Naive thymus-derived CD4-positive, alpha-beta T cell (primary cell): ENCODE measurements at regions of chr5 and their contacts with region 1.

Region 1: GRCh38 chr5:154940772-154941620 is at the start of gene MRPL22:
- DNase-seq: peak; percentile 85 to 99 (median 94)
- ATAC-seq: peak; percentile 84
- H3K4me3 ChIP-seq: peak within 1 kb of the TSS; percentile 76
- H3K4me3 Mint-ChIP-seq: peak within 1 kb of the TSS; percentile 89 to 100 (median 96)
- H3K27ac ChIP-seq: peak within 1 kb of the TSS; percentile 94
- H3K27ac Mint-ChIP-seq: peak within 1 kb of the TSS; percentile 93 to 98 (median 96)
- H3K4me1 ChIP-seq: peaks cover 22 to 25% of the 10 kb centered on the region in 2 donors
- H3K4me1 Mint-ChIP-seq: peaks cover 23 to 62% (median 47%) of the 10 kb centered on the region in 7 donors
- H3K27me3 ChIP-seq: no peaks in the 10 kb centered on the region
- H3K27me3 Mint-ChIP-seq: no peaks in the 10 kb centered on the region
- total RNA-seq, gene MRPL22: 18.4 to 62.0 (median 24.9) TPM

Region 2: GRCh38 chr5:154189819-154190594 is 751.0 kb before region 1 on chr5:
- CTCF ChIA-PET with region 1: no interaction called
- POLR2A ChIA-PET with region 1: no interaction called
- intact Hi-C with region 1: loop called (anchors 2 to 10 kb)
- DNase-seq: peak; percentile 63 to 82 (median 79)
- ATAC-seq: peak; percentile 93
- H3K4me3 ChIP-seq: peak overlapping the region; percentile 94
- H3K4me3 Mint-ChIP-seq: peak overlapping the region; percentile 82 to 93 (median 88)
- H3K27ac ChIP-seq: peak overlapping the region; percentile 80
- H3K27ac Mint-ChIP-seq: peak overlapping the region; percentile 71 to 83 (median 78)
- H3K4me1 ChIP-seq: peaks cover 16 to 22% of the 10 kb centered on the region in 2 donors
- H3K4me1 Mint-ChIP-seq: peaks cover 33 to 49% (median 41%) of the 10 kb centered on the region in 7 donors
- H3K27me3 ChIP-seq: no peaks in the 10 kb centered on the region
- H3K27me3 Mint-ChIP-seq: peaks cover 0 to 12% (median 0%) of the 10 kb centered on the region in 5 donors

Region 3: GRCh38 chr5:154647114-154647760 is 293.8 kb before region 1 on chr5:
- CTCF ChIA-PET with region 1: interaction called, 6 read pairs
- POLR2A ChIA-PET with region 1: no interaction called
- intact Hi-C with region 1: loop called (anchors 1 to 5 kb)
- DNase-seq: no peak
- ATAC-seq: peak; percentile 52
- H3K4me3 ChIP-seq: peak overlapping the region; percentile 54
- H3K4me3 Mint-ChIP-seq: peak overlapping the region; percentile 72 to 87 (median 84)
- H3K27ac ChIP-seq: no peak overlapping the region
- H3K27ac Mint-ChIP-seq: peak overlapping the region in 1 of 9 donors; percentile 59
- H3K4me1 ChIP-seq: peaks cover 0 to 3% of the 10 kb centered on the region in 2 donors
- H3K4me1 Mint-ChIP-seq: peaks cover 10 to 19% (median 16%) of the 10 kb centered on the region in 7 donors
- H3K27me3 ChIP-seq: peaks cover 0 to 12% of the 10 kb centered on the region in 2 donors
- H3K27me3 Mint-ChIP-seq: peaks cover 18 to 46% (median 28%) of the 10 kb centered on the region in 5 donors

Region 4: DNA sequence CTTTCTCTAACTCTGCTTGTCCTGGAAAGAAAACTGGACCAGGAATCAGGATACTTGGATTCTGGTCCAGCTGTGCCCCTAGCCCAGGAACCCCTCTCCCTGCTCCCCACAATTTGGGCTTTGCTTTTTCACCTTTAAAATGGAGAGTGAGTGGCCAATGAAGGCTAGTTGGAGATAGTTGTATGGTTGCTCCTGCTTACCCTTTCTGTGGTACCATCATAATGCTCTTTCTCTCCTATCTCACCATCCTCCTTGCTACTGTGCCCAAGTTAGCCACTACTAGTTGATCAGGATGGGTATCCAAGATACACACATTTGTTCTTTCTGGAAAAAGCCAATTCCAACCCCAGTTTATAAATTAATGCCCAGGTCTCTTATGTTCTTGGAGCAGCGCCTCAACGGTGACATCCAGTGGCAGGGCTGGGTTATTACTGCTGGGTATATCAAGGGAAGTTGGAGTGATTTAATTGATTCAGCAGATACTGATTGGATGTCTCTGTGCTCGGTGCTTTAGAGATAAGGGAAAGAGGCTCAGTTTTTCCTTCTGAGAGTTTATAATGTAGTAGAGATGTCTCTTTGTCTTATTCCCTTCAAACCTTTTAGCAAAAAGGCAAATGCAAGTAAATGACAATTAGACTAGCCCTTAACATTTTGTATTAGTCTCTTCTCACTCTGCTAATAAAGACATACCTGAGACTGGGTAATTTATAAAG is 129.2 kb before region 1 on chr5:
- CTCF ChIA-PET with region 1: no interaction called
- POLR2A ChIA-PET with region 1: no interaction called
- intact Hi-C with region 1: loop called in 1 of 2 experiments (anchors 2 kb)
- DNase-seq: peak; percentile 30 to 68 (median 58)
- ATAC-seq: peak; percentile 88
- H3K4me3 ChIP-seq: no peak overlapping the region
- H3K4me3 Mint-ChIP-seq: peak overlapping the region in 4 of 10 donors; percentile 10 to 47 (median 23)
- H3K27ac ChIP-seq: no peak overlapping the region
- H3K27ac Mint-ChIP-seq: peak overlapping the region; percentile 1 to 82 (median 55)
- H3K4me1 ChIP-seq: peaks cover 15 to 18% of the 10 kb centered on the region in 2 donors
- H3K4me1 Mint-ChIP-seq: peaks cover 21 to 46% (median 36%) of the 10 kb centered on the region in 7 donors
- H3K27me3 ChIP-seq: no peaks in the 10 kb centered on the region
- H3K27me3 Mint-ChIP-seq: no peaks in the 10 kb centered on the region

Region 5: GRCh38 chr5:155353231-155353630 is 412.2 kb after region 1 on chr5:
- CTCF ChIA-PET with region 1: no interaction called
- POLR2A ChIA-PET with region 1: no interaction called
- intact Hi-C with region 1: no loop called
- DNase-seq: no peak
- ATAC-seq: no peak
- H3K4me3 ChIP-seq: no peak overlapping the region
- H3K4me3 Mint-ChIP-seq: no peak overlapping the region
- H3K27ac ChIP-seq: no peak overlapping the region
- H3K27ac Mint-ChIP-seq: no peak overlapping the region
- H3K4me1 ChIP-seq: no peaks in the 10 kb centered on the region
- H3K4me1 Mint-ChIP-seq: no peaks in the 10 kb centered on the region
- H3K27me3 ChIP-seq: no peaks in the 10 kb centered on the region
- H3K27me3 Mint-ChIP-seq: peaks cover 0 to 5% (median 0%) of the 10 kb centered on the region in 5 donors

Region 6: DNA sequence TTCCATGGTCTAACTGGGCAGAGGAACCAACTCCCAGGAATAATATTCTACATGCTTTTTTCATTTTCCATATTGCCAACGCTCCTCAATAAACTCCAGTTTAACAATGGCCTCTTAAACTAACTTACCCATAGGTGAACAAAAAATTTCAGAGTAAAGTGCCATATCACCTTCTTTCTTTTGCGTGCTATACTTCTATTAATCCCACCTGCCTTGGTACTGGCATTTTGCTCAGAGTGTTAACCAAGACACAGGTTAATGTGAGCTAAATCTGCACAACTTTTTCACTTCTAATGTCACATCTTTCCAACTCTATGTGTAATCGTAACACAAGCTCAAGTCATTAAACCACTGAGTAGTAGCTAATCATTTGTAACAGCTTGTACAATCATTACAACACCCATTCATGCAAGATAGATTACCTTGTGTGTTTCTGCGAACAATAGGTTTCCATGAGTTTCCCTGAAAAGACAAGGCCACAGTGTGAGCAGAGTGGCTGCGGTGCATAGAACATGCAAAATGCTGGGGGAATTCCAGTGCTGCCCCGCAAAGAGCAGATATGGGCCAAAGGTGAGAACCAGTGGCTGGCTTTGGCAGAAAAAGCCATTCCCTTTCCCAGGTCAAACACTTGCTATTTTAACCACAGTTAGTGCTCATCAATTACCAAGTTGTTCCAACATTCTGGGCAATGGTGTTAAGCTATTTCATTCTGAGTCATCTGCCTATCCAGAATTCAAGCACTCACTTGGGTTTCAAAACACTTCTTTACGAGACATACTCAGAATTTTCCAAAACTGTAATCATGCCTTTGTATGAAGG is 1979.3 kb after region 1 on chr5:
- CTCF ChIA-PET with region 1: no interaction called
- POLR2A ChIA-PET with region 1: no interaction called
- intact Hi-C with region 1: loop called in 1 of 2 experiments (anchors 10 kb)
- DNase-seq: peak in 1 of 9 donors; percentile 76
- ATAC-seq: peak; percentile 46
- H3K4me3 ChIP-seq: no peak overlapping the region
- H3K4me3 Mint-ChIP-seq: peak overlapping the region in 1 of 10 donors; percentile 79
- H3K27ac ChIP-seq: no peak overlapping the region
- H3K27ac Mint-ChIP-seq: peak overlapping the region in 7 of 9 donors; percentile 18 to 94 (median 52)
- H3K4me1 ChIP-seq: peaks cover 9 to 10% of the 10 kb centered on the region in 2 donors
- H3K4me1 Mint-ChIP-seq: peaks cover 12 to 78% (median 67%) of the 10 kb centered on the region in 7 donors
- H3K27me3 ChIP-seq: no peaks in the 10 kb centered on the region
- H3K27me3 Mint-ChIP-seq: no peaks in the 10 kb centered on the region